ENCODE measurements at regions of chr15 and their contacts with region 1.

Region 1: DNA sequence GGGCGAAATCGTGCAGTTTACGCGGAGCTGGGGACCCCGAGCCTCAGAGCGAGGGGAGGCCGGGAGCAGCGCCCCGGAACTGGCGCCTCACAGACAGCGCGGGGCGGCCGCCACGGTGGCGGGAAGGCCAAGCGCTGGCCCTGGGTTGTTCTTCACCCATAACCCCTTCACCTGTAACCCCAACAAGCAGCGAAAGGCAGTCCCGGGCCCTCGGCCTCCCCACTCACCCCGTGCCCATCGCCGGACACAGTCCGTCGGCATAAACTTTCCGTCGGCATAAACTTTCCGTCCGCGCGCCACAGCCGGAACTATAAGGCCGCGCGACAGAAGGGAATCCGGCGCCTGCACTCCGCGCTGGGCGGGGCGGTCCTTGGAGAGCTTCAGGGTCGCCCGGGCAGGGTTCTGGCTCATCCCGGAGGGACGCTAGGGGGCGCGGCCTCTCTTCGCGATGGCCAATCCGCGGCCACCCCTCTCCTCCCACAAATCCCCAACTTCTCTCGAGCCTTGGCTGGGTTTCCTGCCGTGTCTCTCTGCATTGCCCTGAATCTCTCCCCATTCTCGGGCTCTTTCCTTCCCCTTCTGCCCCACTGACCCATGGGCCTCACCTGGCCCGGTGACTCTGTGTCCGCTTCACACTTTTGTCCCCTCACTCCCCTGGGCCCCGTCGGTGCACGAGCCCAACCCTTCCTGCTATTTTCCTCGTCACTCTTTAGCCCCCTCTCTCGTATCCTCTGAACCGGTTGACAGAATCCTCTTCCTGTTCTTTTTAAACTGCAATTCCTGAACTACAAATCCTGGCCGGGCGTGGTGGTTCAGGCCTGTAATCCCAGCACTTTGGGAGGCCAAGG is at the start of gene INTS14:
- DNase-seq: peak; percentile 83 to 89 (median 84)
- H3K4me3 ChIP-seq: peak within 1 kb of the TSS; percentile 85 to 97
- H3K4me3 Mint-ChIP-seq: peak within 1 kb of the TSS; percentile 96 to 99 (median 98)
- H3K27ac ChIP-seq: peak within 1 kb of the TSS; percentile 76
- H3K27ac Mint-ChIP-seq: peak within 1 kb of the TSS; percentile 98 to 99 (median 99)
- H3K4me1 ChIP-seq: peaks cover 27% of the 10 kb centered on the region
- H3K4me1 Mint-ChIP-seq: peaks cover 21 to 49% (median 34%) of the 10 kb centered on the region in 4 donors
- H3K27me3 ChIP-seq: no peaks in the 10 kb centered on the region
- H3K27me3 Mint-ChIP-seq: no peaks in the 10 kb centered on the region
- total RNA-seq, gene INTS14: 35.3 to 40.3 TPM

Region 2: DNA sequence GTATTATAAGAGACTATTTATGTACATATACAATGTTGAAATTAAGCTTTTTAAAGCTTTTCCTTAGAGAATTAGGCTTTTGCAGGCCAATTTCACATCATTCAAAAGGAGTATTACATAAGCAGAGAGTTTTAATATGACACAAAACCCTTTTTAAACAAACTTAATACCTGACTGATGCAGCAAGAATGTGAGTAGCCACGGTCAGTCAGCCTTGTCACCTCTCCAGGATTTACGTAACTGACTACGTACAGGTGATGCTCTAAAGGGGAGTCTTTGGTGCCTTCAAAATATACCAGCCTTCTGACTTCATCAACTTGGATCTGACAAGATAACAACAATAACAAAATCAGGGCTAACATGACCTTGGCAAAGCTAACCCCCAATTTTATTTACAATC is 144.2 kb before region 1 on chr15:
- CTCF ChIA-PET with region 1: no interaction called
- POLR2A ChIA-PET with region 1: no interaction called
- intact Hi-C with region 1: no loop called
- DNase-seq: no peak
- H3K4me3 ChIP-seq: no peak overlapping the region
- H3K4me3 Mint-ChIP-seq: no peak overlapping the region
- H3K27ac ChIP-seq: no peak overlapping the region
- H3K27ac Mint-ChIP-seq: no peak overlapping the region
- H3K4me1 ChIP-seq: no peaks in the 10 kb centered on the region
- H3K4me1 Mint-ChIP-seq: peaks cover 0 to 2% (median 0%) of the 10 kb centered on the region in 4 donors
- H3K27me3 ChIP-seq: no peaks in the 10 kb centered on the region
- H3K27me3 Mint-ChIP-seq: no peaks in the 10 kb centered on the region

Region 3: DNA sequence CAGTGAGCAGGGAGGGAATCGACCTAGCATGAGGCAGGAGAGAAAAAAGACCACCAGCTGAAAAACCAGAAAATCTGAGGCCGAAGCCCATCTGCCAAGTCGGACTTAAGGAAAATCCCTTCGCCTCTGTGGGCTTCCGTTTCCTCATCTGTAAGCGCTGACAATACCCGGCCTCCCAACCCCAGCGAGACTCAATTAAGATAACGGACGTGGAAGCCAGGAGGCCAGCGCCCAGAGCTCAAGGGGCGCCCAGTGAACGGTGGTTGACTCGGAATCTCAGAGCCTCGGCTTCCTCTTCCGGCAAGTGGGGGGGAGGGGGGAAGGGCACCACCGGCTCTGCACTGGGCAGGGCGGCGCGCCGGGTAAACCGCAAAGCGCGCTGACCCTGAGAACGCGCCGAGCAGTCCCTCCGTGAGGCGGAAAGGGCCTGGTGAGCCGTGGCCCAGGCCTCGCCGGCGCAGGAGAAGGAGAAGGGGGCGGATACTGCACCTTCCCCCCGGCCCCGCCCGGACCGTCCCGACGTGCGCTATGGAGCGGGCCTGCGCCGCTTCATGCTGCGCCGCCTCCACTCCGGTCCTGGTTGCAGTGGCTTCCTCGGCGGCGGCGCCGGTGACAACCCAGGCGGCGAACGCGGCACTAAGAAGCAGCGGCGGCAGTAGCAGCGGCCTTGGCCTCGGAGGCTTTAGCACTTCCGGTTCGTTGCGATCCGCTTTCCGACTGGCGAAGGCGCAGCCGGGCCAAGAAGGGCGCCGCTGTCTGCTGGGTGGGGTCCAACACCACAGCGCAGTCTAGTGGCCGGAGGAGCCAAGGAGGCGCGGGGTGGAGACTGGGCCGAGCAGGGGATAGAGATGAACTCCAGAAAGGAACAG is 93.9 kb before region 1 on chr15 and contains the start of gene DPP8:
- CTCF ChIA-PET with region 1: no interaction called
- POLR2A ChIA-PET with region 1: interaction called, 13 read pairs
- intact Hi-C with region 1: loop called (anchors 1 kb)
- DNase-seq: peak; percentile 92 to 93 (median 92)
- H3K4me3 ChIP-seq: peak within 1 kb of the TSS; percentile 86 to 96
- H3K4me3 Mint-ChIP-seq: peak within 1 kb of the TSS; percentile 85 to 100 (median 95)
- H3K27ac ChIP-seq: peak within 1 kb of the TSS; percentile 85
- H3K27ac Mint-ChIP-seq: peak within 1 kb of the TSS; percentile 82 to 97 (median 97)
- H3K4me1 ChIP-seq: peaks cover 52% of the 10 kb centered on the region
- H3K4me1 Mint-ChIP-seq: peaks cover 23 to 53% (median 38%) of the 10 kb centered on the region in 4 donors
- H3K27me3 ChIP-seq: no peaks in the 10 kb centered on the region
- H3K27me3 Mint-ChIP-seq: no peaks in the 10 kb centered on the region
- total RNA-seq, gene DPP8: 54.0 to 58.6 TPM

Region 4: DNA sequence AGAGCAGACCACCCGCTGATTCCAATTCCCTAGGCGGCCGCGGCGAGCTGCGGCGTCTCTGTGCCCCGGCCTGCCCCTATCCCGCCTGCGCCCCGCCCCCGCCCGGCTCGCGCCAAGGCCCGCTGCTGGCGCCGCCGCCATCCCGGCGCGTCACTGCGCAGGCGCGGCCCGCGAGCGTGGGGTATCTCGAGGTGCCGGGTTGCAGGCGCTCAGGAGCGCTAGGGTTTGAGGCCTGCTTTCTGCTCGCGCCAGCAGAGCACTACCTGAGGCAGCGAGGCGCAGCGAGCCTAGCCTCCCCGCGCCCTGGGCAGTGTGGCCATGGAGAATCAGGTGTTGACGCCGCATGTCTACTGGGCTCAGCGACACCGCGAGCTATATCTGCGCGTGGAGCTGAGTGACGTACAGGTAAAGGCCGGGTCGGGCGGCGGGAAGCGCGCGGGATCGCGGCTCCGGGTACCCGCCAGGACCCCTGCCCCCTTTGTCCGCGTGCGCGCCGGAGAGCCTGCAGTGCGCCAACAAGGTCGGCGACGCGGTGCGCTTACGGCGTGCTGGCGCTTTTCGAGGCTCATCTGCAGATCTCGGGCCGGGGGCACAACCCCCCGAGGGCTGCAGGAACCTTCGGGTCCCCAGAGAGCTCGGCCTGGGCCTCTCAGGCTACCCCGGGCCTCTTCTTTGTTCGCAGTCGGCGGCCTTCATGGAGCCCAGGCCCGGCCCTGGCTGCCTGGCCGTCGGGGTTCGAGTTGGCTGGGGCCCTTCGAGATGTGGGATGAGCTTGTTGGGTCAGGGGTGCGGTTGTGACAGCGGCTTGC is 80.6 kb before region 1 on chr15 and contains the start of gene HACD3:
- CTCF ChIA-PET with region 1: interaction called, 4 read pairs
- POLR2A ChIA-PET with region 1: interaction called, 16 read pairs
- intact Hi-C with region 1: loop called (anchors 5 kb)
- DNase-seq: peak; percentile 83 to 90 (median 87)
- H3K4me3 ChIP-seq: peak within 1 kb of the TSS; percentile 52 to 93
- H3K4me3 Mint-ChIP-seq: peak within 1 kb of the TSS; percentile 83 to 90 (median 88)
- H3K27ac ChIP-seq: peak within 1 kb of the TSS; percentile 67
- H3K27ac Mint-ChIP-seq: peak within 1 kb of the TSS; percentile 55 to 95 (median 87)
- H3K4me1 ChIP-seq: peaks cover 24% of the 10 kb centered on the region
- H3K4me1 Mint-ChIP-seq: peaks cover 24 to 33% (median 30%) of the 10 kb centered on the region in 4 donors
- H3K27me3 ChIP-seq: no peaks in the 10 kb centered on the region
- H3K27me3 Mint-ChIP-seq: no peaks in the 10 kb centered on the region
- total RNA-seq, gene HACD3: 23.1 to 23.8 TPM

Region 5: GRCh38 chr15:65583701-65584100 is 27.4 kb before region 1 on chr15:
- CTCF ChIA-PET with region 1: interaction called, 5 read pairs
- POLR2A ChIA-PET with region 1: interaction called, 10 read pairs
- intact Hi-C with region 1: no loop called
- DNase-seq: peak; percentile 54 to 74 (median 66)
- H3K4me3 ChIP-seq: no peak overlapping the region
- H3K4me3 Mint-ChIP-seq: peak overlapping the region; percentile 46 to 71 (median 59)
- H3K27ac ChIP-seq: peak overlapping the region; percentile 50
- H3K27ac Mint-ChIP-seq: peak overlapping the region; percentile 92 to 97 (median 95)
- H3K4me1 ChIP-seq: peaks cover 19% of the 10 kb centered on the region
- H3K4me1 Mint-ChIP-seq: peaks cover 23 to 36% (median 31%) of the 10 kb centered on the region in 4 donors
- H3K27me3 ChIP-seq: no peaks in the 10 kb centered on the region
- H3K27me3 Mint-ChIP-seq: no peaks in the 10 kb centered on the region

Region 6: GRCh38 chr15:65856821-65857455 is 245.8 kb after region 1 on chr15:
- CTCF ChIA-PET with region 1: interaction called, 4 read pairs
- POLR2A ChIA-PET with region 1: interaction called, 3 read pairs
- intact Hi-C with region 1: loop called (anchors 2 kb)
- DNase-seq: peak; percentile 76 to 84 (median 77)
- H3K4me3 ChIP-seq: no peak overlapping the region
- H3K4me3 Mint-ChIP-seq: peak overlapping the region in 1 of 8 donors; percentile 32
- H3K27ac ChIP-seq: no peak overlapping the region
- H3K27ac Mint-ChIP-seq: peak overlapping the region in 4 of 7 donors; percentile 10 to 88 (median 49)
- H3K4me1 ChIP-seq: no peaks in the 10 kb centered on the region
- H3K4me1 Mint-ChIP-seq: peaks cover 9 to 13% (median 10%) of the 10 kb centered on the region in 4 donors
- H3K27me3 ChIP-seq: no peaks in the 10 kb centered on the region
- H3K27me3 Mint-ChIP-seq: no peaks in the 10 kb centered on the region